Sigmoid colon (tissue), 7 donors: ENCODE measurements at regions of chr16 and their contacts with region 1.

Region 1: DNA sequence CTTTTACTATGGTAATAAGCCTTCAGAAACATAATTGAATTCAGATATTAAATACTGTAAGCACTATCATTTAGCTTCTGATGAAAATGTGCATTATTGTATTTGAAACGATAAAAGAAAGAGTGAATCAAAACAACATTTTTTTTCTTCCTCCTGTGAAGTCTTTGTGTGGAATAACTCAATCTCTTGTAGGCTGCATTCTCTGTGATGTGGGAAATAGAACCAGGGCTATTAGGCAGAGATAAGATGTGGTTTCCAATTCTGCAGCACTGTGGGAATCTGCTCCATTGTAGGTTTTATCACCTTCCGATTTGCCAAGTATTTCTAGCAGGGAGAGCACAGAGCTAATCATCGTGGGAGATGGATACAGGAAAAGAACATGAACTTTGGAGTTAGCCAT is 624.5 kb downstream of the RBFOX1 start:
- DNase-seq: no peak
- H3K4me3 ChIP-seq: no peak overlapping the region
- H3K27ac ChIP-seq: no peak overlapping the region
- H3K4me1 ChIP-seq: no peaks in the 10 kb centered on the region
- H3K27me3 ChIP-seq: no peaks in the 10 kb centered on the region
- CTCF ChIP-seq: no peak
- EP300 ChIP-seq: no peak
- POLR2A ChIP-seq: no peak

Region 2: DNA sequence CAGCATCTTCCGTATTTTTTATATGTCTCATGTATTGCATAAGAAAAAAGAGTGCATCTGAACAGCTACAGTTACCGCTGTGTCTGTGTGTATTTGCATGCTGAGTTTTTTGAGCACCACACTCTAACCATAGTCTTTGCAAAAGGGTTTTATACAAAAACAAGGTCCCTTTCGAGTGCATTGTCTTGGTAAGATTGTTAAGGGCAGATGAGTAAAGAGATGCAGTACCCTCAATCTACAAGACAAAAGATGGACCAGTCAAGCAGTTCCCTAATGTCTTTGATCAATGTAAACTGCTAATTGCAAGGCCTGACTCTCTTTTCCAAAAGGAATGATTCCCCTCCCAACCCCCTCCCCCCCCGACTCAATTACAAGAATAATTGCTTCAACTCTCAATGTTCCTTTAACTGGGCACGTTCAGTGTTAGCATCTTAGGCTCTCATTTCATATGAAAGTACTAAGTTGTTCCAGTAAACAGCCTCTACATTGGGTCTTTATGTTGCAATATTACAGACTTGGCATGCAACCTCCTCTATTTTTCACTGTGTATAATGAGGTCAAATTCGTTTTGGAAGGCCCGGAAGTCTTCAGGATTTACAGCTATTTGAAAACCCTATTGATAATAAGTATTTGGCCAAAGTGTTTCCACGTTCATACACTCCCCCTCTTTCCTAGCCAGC is 1095.9 kb before region 1 on chr16:
- intact Hi-C with region 1: loop called (anchors 10 kb)
- DNase-seq: no peak
- H3K4me3 ChIP-seq: no peak overlapping the region
- H3K27ac ChIP-seq: no peak overlapping the region
- H3K4me1 ChIP-seq: no peaks in the 10 kb centered on the region
- H3K27me3 ChIP-seq: no peaks in the 10 kb centered on the region
- CTCF ChIP-seq: no peak
- EP300 ChIP-seq: no peak
- POLR2A ChIP-seq: no peak

Region 3: DNA sequence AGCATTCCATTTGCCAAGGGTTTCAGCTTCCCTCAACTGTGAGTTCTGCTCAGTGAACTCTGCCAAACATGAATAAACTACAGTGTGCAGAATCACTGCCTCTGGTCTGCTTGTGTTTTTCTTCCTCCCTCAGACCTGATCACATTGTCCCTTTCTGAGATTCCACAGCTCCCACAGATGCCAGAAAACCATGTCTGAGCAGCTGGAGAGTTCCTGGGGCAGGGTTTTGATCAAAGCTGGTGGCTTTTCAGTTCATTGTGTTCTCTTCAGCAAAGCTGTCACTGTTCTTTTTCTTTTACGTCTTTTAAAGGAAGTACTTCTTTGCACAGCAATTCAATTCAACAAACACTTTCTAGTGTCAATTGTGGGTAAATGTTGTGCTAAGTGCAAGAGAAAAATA is 68.7 kb before region 1 on chr16:
- intact Hi-C with region 1: loop called (anchors 10 kb)
- DNase-seq: no peak
- H3K4me3 ChIP-seq: no peak overlapping the region
- H3K27ac ChIP-seq: peak overlapping the region in 2 of 4 donors; percentile 61 to 63
- H3K4me1 ChIP-seq: peaks cover 0 to 24% (median 15%) of the 10 kb centered on the region in 4 donors
- H3K27me3 ChIP-seq: no peaks in the 10 kb centered on the region
- CTCF ChIP-seq: no peak
- EP300 ChIP-seq: peak in 1 of 4 donors; percentile 72
- POLR2A ChIP-seq: no peak

Region 4: DNA sequence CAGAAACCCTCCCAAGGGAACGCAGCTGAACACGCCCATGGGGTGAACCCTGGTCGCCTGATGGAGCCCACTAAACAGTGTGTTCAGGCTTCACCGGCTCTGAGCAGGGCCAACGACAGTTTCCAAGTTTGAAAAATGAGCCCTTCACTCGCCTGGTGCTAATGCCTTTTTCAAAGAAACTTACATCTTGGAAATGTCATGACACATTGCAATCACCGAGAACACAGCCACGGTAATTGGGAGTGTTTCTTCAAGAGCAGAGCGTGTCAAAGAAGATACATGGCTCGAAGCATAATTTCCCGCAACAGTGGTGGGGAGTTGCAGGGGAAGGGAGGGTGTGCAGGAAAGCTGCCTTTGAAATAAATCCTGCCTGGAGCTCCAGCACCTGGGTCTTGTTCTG is 169.9 kb after region 1 on chr16:
- intact Hi-C with region 1: no loop called
- DNase-seq: no peak
- H3K4me3 ChIP-seq: no peak overlapping the region
- H3K27ac ChIP-seq: no peak overlapping the region
- H3K4me1 ChIP-seq: no peaks in the 10 kb centered on the region
- H3K27me3 ChIP-seq: no peaks in the 10 kb centered on the region
- CTCF ChIP-seq: no peak
- EP300 ChIP-seq: no peak
- POLR2A ChIP-seq: no peak